Activated CD4-positive, alpha-beta T cell treated with anti-CD3 and anti-CD28 coated beads, Interleukin-2, amount 10 ng/mL, durations not matched to agents 7 days and 5 days (primary cell): ENCODE measurements at regions of chr4 and their contacts with region 1.

Region 1: DNA sequence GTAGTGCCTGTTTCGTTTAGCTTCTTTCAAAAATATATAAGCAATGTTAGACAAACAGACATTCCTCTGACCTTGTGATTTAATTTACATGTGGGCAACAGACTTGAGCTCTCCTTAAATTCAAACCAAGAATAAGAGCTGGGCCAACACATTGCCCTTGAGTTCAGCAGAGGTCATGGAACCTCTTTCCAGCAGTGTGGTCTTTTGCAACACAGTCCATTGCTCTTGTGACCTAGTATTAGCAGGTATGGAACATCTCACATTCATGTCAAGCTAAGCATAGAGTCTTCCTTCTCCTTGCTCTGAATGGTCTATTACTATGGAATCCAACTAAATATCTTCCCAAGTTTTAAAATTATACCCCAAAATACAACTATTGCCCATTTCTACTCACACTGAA is 33.7 kb upstream of the MND1 start:
- DNase-seq: no peak
- H3K4me3 Mint-ChIP-seq: no peak overlapping the region
- H3K27ac Mint-ChIP-seq: no peak overlapping the region
- H3K4me1 Mint-ChIP-seq: no peaks in the 10 kb centered on the region
- H3K27me3 Mint-ChIP-seq: peaks cover 2% of the 10 kb centered on the region

Region 2: GRCh38 chr4:153281476-153281875 is 29.3 kb before region 1 on chr4:
- CTCF ChIA-PET with region 1: no interaction called
- POLR2A ChIA-PET with region 1: no interaction called
- DNase-seq: no peak
- H3K4me3 Mint-ChIP-seq: no peak overlapping the region
- H3K27ac Mint-ChIP-seq: no peak overlapping the region
- H3K4me1 Mint-ChIP-seq: peaks cover 7% of the 10 kb centered on the region
- H3K27me3 Mint-ChIP-seq: no peaks in the 10 kb centered on the region

Region 3: DNA sequence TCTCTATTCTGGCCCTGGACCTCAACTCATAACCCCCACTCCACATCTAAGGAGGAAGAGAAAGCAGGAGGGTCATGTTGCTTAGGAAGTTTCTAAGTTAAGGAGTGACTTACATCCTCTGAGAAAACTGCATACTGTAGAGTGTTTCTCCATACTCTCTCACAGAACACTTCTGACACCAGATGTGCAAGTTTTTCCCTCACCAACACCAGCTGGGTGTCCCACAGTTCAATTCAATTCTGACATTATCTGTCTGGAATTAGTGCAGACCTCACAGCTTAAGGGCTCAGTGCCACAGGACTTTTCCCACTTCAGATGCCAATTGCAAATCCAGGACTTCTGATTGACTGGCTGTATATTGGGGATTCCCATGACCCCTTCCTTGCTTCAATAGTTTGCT is 567.1 kb after region 1 on chr4:
- CTCF ChIA-PET with region 1: no interaction called
- POLR2A ChIA-PET with region 1: interaction called, 12 read pairs
- DNase-seq: no peak
- H3K4me3 Mint-ChIP-seq: no peak overlapping the region
- H3K27ac Mint-ChIP-seq: no peak overlapping the region
- H3K4me1 Mint-ChIP-seq: no peaks in the 10 kb centered on the region
- H3K27me3 Mint-ChIP-seq: peaks cover 11% of the 10 kb centered on the region